Caco-2 (cell line): ENCODE measurements at regions of chr17 and their contacts with region 1.

Region 1: DNA sequence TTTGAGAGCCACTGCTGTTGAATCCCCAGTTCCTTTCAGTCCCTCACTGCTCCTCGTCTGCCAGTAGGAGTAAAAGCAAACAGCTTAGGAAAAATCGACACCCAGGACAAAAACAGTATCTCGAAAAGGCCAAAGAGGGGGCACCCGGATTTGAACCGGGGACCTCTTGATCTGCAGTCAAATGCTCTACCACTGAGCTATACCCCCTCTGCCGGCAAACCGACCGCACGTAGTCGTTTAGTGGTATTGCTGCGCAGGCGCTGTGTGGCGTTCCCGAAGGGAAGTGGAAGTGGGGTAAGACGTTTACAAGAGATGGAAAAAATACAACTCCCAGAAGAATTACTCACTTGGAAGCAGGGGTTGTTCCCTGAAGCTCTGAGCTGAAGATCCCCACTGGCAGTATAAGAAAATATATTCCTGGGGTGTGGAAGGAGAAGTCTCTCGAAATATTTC is 2.2 kb upstream of the PLXDC1 start:
- DNase-seq: peak; percentile 90 to 94
- H3K4me3 ChIP-seq: peak overlapping the region; percentile 83
- H3K4me3 Mint-ChIP-seq: peak overlapping the region; percentile 94
- H3K27ac Mint-ChIP-seq: peak overlapping the region; percentile 96
- H3K4me1 ChIP-seq: peaks cover 4% of the 10 kb centered on the region
- H3K4me1 Mint-ChIP-seq: peaks cover 36% of the 10 kb centered on the region
- H3K27me3 ChIP-seq: peaks cover 5% of the 10 kb centered on the region; the same call in 1 of the 2 replicates
- H3K27me3 Mint-ChIP-seq: peaks cover 10% of the 10 kb centered on the region
- CTCF ChIP-seq: peak; percentile 8 to 10

Region 2: GRCh38 chr17:38752119-38752929 is 401.3 kb before region 1 on chr17 and contains the start of gene PSMB3:
- CTCF ChIA-PET with region 1: no interaction called
- POLR2A ChIA-PET with region 1: interaction called, 3 read pairs
- intact Hi-C with region 1: loop called (anchors 5 kb)
- DNase-seq: peak; percentile 98 to 100
- H3K4me3 ChIP-seq: peak within 1 kb of the TSS; percentile 90
- H3K4me3 Mint-ChIP-seq: peak within 1 kb of the TSS; percentile 79
- H3K27ac Mint-ChIP-seq: peak within 1 kb of the TSS; percentile 80
- H3K4me1 ChIP-seq: peaks cover 13% of the 10 kb centered on the region
- H3K4me1 Mint-ChIP-seq: peaks cover 18% of the 10 kb centered on the region
- H3K27me3 ChIP-seq: no peaks in the 10 kb centered on the region
- H3K27me3 Mint-ChIP-seq: peaks cover 2% of the 10 kb centered on the region
- CTCF ChIP-seq: no peak
- total RNA-seq, gene PSMB3: 427 and 465 TPM in 2 replicates

Region 3: GRCh38 chr17:38967290-38967738 is 186.3 kb before region 1 on chr17 and contains the start of gene FBXO47:
- CTCF ChIA-PET with region 1: interaction called, 26 read pairs
- POLR2A ChIA-PET with region 1: interaction called, 3 read pairs
- intact Hi-C with region 1: loop called (anchors 5 kb)
- DNase-seq: peak; percentile 95 to 98
- H3K4me3 ChIP-seq: peak within 1 kb of the TSS; percentile 46
- H3K4me3 Mint-ChIP-seq: peak within 1 kb of the TSS; percentile 80
- H3K27ac Mint-ChIP-seq: peak within 1 kb of the TSS; percentile 84
- H3K4me1 ChIP-seq: no peaks in the 10 kb centered on the region
- H3K4me1 Mint-ChIP-seq: peaks cover 5% of the 10 kb centered on the region
- H3K27me3 ChIP-seq: no peaks in the 10 kb centered on the region
- H3K27me3 Mint-ChIP-seq: no peaks in the 10 kb centered on the region
- CTCF ChIP-seq: peak in 1 of 2 experiments; percentile 53
- total RNA-seq, gene FBXO47: not detected in 2 replicates

Region 4: GRCh38 chr17:39069114-39069756 is 84.4 kb before region 1 on chr17:
- CTCF ChIA-PET with region 1: interaction called, 5 read pairs
- POLR2A ChIA-PET with region 1: no interaction called
- intact Hi-C with region 1: loop called (anchors 1 kb)
- DNase-seq: peak in 1 of 2 experiments; percentile 34
- H3K4me3 ChIP-seq: no peak overlapping the region
- H3K4me3 Mint-ChIP-seq: no peak overlapping the region
- H3K27ac Mint-ChIP-seq: no peak overlapping the region
- H3K4me1 ChIP-seq: no peaks in the 10 kb centered on the region
- H3K4me1 Mint-ChIP-seq: peaks cover 6% of the 10 kb centered on the region
- H3K27me3 ChIP-seq: no peaks in the 10 kb centered on the region; the same call in 1 of the 2 replicates
- H3K27me3 Mint-ChIP-seq: peaks cover 2% of the 10 kb centered on the region
- CTCF ChIP-seq: peak; percentile 56 to 73

Region 5: DNA sequence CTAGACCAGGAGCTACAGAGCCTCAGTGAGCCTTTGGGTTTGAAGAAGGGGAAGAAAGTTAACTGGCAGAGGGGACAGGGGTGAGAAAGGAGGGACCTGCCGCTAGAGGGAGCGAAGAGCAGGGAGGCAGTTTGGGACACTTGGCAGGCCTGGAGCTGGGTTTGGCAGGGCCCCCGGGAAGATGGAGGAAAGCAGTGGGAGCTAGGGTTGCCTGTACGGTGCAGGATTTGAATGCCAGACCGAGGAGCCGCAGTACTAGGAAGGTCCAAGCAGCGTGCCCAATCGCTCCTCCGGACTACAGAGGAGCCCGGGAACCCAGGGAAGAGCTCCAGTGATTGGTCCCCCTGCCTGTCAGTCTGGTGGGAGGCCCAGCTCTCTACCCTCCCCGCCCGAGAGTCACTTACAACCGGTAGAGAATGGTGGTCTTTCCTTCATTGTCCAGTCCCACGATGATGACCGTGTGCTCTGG is 11.1 kb after region 1 on chr17:
- CTCF ChIA-PET with region 1: interaction called, 18 read pairs
- POLR2A ChIA-PET with region 1: interaction called, 3 read pairs
- intact Hi-C with region 1: no loop called
- DNase-seq: peak; percentile 79 to 80
- H3K4me3 ChIP-seq: no peak overlapping the region
- H3K4me3 Mint-ChIP-seq: no peak overlapping the region
- H3K27ac Mint-ChIP-seq: no peak overlapping the region
- H3K4me1 ChIP-seq: peaks cover 21% of the 10 kb centered on the region
- H3K4me1 Mint-ChIP-seq: peaks cover 23% of the 10 kb centered on the region
- H3K27me3 ChIP-seq: no peaks in the 10 kb centered on the region
- H3K27me3 Mint-ChIP-seq: no peaks in the 10 kb centered on the region
- CTCF ChIP-seq: peak; percentile 76 to 86

Region 6: GRCh38 chr17:39174907-39175694 is 21.5 kb after region 1 on chr17:
- CTCF ChIA-PET with region 1: interaction called, 15 read pairs
- POLR2A ChIA-PET with region 1: no interaction called
- intact Hi-C with region 1: no loop called
- DNase-seq: peak; percentile 66 to 71
- H3K4me3 ChIP-seq: no peak overlapping the region
- H3K4me3 Mint-ChIP-seq: no peak overlapping the region
- H3K27ac Mint-ChIP-seq: no peak overlapping the region
- H3K4me1 ChIP-seq: no peaks in the 10 kb centered on the region
- H3K4me1 Mint-ChIP-seq: no peaks in the 10 kb centered on the region
- H3K27me3 ChIP-seq: no peaks in the 10 kb centered on the region
- H3K27me3 Mint-ChIP-seq: no peaks in the 10 kb centered on the region
- CTCF ChIP-seq: peak; percentile 68 to 70

Region 7: DNA sequence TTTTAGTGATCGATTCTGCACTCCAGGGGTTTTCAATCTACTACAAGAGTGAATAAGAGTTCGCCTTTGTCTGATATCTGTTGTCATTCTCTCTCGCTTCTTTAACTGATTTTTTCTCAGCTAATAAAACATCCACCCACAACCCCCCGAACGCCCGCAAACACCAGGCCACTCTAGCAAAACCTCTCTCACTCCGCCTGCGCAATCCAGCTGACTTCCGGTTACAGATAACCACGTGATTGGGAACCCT is 46.1 kb after region 1 on chr17:
- CTCF ChIA-PET with region 1: interaction called, 13 read pairs
- POLR2A ChIA-PET with region 1: interaction called, 6 read pairs
- intact Hi-C with region 1: no loop called
- DNase-seq: peak; percentile 87 to 94
- H3K4me3 ChIP-seq: peak overlapping the region; percentile 87
- H3K4me3 Mint-ChIP-seq: peak overlapping the region; percentile 87
- H3K27ac Mint-ChIP-seq: peak overlapping the region; percentile 99
- H3K4me1 ChIP-seq: peaks cover 15% of the 10 kb centered on the region
- H3K4me1 Mint-ChIP-seq: peaks cover 6% of the 10 kb centered on the region
- H3K27me3 ChIP-seq: no peaks in the 10 kb centered on the region
- H3K27me3 Mint-ChIP-seq: no peaks in the 10 kb centered on the region
- CTCF ChIP-seq: no peak